Natural killer cell (primary cell): ENCODE measurements at regions of chr15 and their contacts with region 1.

Region 1: GRCh38 chr15:54082836-54083492 is 104.7 kb downstream of the UNC13C start:
- DNase-seq: peak in 1 of 2 donors; percentile 20
- ATAC-seq: peak in 1 of 3 donors; percentile 33
- H3K4me3 ChIP-seq: no peak overlapping the region
- H3K4me3 Mint-ChIP-seq: no peak overlapping the region
- H3K27ac ChIP-seq: no peak overlapping the region
- H3K27ac Mint-ChIP-seq: no peak overlapping the region
- H3K4me1 ChIP-seq: no peaks in the 10 kb centered on the region
- H3K4me1 Mint-ChIP-seq: no peaks in the 10 kb centered on the region
- H3K27me3 ChIP-seq: peaks cover 2% of the 10 kb centered on the region
- H3K27me3 Mint-ChIP-seq: peaks cover 3 to 6% of the 10 kb centered on the region in 2 donors
- CTCF ChIP-seq: peak; percentile 58

Region 2: GRCh38 chr15:54064365-54064764 is 18.6 kb before region 1 on chr15:
- intact Hi-C with region 1: no loop called
- DNase-seq: no peak
- ATAC-seq: no peak
- H3K4me3 ChIP-seq: no peak overlapping the region
- H3K4me3 Mint-ChIP-seq: no peak overlapping the region
- H3K27ac ChIP-seq: no peak overlapping the region
- H3K27ac Mint-ChIP-seq: no peak overlapping the region
- H3K4me1 ChIP-seq: no peaks in the 10 kb centered on the region
- H3K4me1 Mint-ChIP-seq: no peaks in the 10 kb centered on the region
- H3K27me3 ChIP-seq: no peaks in the 10 kb centered on the region
- H3K27me3 Mint-ChIP-seq: no peaks in the 10 kb centered on the region
- CTCF ChIP-seq: no peak

Region 3: DNA sequence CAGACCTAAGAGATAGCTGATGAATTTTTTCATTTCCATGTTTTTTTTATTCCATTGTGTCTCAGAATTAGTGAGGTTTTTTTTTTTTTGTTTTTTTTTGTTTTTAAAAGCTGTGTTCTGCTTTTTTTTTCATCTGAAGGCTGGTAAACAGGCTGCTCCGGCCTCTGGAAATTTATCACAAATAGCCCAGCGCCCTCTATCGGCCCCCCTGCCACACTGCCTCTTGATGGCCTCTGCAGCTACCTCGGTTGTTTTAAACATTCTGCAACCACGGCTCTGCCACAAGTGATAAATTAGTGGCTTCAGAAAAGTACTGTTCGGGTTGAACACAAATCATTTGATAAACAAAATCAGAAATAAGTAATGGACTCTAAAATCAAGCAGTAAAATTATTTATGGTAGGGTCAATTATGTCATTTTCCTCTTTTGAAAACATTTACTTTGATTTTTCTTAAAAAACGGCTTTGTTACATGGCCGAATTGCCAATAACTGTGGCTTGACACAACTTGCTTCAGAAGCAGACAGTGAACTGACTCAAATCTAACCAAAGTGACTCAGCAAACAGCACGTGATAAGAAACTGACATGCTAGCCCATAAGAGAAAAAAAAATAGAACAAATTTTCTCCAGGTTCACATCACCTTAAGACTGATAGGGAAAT is 1026.0 kb after region 1 on chr15:
- intact Hi-C with region 1: loop called (anchors 2 kb)
- DNase-seq: peak; percentile 55 to 57
- ATAC-seq: peak in 2 of 3 donors; percentile 64 to 80
- H3K4me3 ChIP-seq: no peak overlapping the region
- H3K4me3 Mint-ChIP-seq: no peak overlapping the region
- H3K27ac ChIP-seq: no peak overlapping the region
- H3K27ac Mint-ChIP-seq: no peak overlapping the region
- H3K4me1 ChIP-seq: no peaks in the 10 kb centered on the region
- H3K4me1 Mint-ChIP-seq: no peaks in the 10 kb centered on the region
- H3K27me3 ChIP-seq: no peaks in the 10 kb centered on the region
- H3K27me3 Mint-ChIP-seq: no peaks in the 10 kb centered on the region
- CTCF ChIP-seq: peak; percentile 79